PC-3 (cell line): ENCODE measurements at regions of chr14 and their contacts with region 1.

Region 1: DNA sequence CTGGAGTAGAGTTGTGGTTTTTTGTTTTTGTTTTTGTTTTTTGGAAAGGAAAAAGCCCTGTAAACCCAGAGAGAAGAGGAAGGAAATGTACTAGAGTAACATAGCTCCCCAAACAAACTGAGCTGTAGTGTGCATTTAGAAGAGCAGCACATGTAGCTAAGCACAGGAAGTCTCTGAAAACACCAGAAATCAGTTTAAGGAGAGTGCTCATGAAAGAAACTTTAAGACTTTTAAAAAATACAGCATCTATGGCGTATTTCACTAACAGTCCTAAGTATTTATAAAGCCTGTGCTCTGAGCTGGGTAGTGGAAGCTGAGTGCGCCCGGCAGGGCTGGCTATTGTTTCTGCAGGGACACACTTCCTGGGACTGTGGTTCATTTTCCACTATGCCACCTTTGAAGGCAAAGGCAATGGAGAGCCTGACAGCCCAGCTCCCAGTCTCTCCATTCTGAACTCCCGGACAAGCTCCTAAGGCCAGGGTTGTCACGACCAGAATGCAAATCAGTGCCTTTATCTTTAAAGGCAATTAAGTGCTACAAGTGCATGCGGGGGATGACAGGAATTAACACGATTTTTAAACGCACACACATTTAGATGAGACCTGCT is 45.4 kb downstream of the NIN start:
- DNase-seq: no peak
- ATAC-seq: no peak
- H3K4me3 ChIP-seq: no peak overlapping the region
- H3K27ac ChIP-seq: no peak overlapping the region
- H3K4me1 ChIP-seq: peaks cover 15% of the 10 kb centered on the region
- H3K27me3 ChIP-seq: no peaks in the 10 kb centered on the region
- CTCF ChIP-seq: no peak

Region 2: GRCh38 chr14:50697659-50698290 is 87.8 kb before region 1 on chr14:
- CTCF ChIA-PET with region 1: no interaction called
- POLR2A ChIA-PET with region 1: no interaction called
- intact Hi-C with region 1: no loop called
- DNase-seq: no peak
- ATAC-seq: no peak; the same call in 1 of the 2 replicates
- H3K4me3 ChIP-seq: no peak overlapping the region
- H3K27ac ChIP-seq: no peak overlapping the region
- H3K4me1 ChIP-seq: no peaks in the 10 kb centered on the region
- H3K27me3 ChIP-seq: no peaks in the 10 kb centered on the region
- CTCF ChIP-seq: no peak

Region 3: GRCh38 chr14:50804181-50804721 is 18.7 kb after region 1 on chr14:
- CTCF ChIA-PET with region 1: no interaction called
- POLR2A ChIA-PET with region 1: no interaction called
- intact Hi-C with region 1: loop called (anchors 2 kb)
- DNase-seq: no peak
- ATAC-seq: no peak; the same call in 1 of the 2 replicates
- H3K4me3 ChIP-seq: no peak overlapping the region
- H3K27ac ChIP-seq: no peak overlapping the region
- H3K4me1 ChIP-seq: peaks cover 31% of the 10 kb centered on the region
- H3K27me3 ChIP-seq: no peaks in the 10 kb centered on the region
- CTCF ChIP-seq: no peak

Region 4: GRCh38 chr14:50823051-50823761 is 37.6 kb after region 1 on chr14:
- CTCF ChIA-PET with region 1: no interaction called
- POLR2A ChIA-PET with region 1: interaction called, 3 read pairs
- intact Hi-C with region 1: loop called (anchors 2 kb)
- DNase-seq: peak; percentile 25
- ATAC-seq: peak; percentile 18
- H3K4me3 ChIP-seq: no peak overlapping the region
- H3K27ac ChIP-seq: peak overlapping the region; percentile 58
- H3K4me1 ChIP-seq: peaks cover 20% of the 10 kb centered on the region
- H3K27me3 ChIP-seq: no peaks in the 10 kb centered on the region
- CTCF ChIP-seq: no peak

Region 5: DNA sequence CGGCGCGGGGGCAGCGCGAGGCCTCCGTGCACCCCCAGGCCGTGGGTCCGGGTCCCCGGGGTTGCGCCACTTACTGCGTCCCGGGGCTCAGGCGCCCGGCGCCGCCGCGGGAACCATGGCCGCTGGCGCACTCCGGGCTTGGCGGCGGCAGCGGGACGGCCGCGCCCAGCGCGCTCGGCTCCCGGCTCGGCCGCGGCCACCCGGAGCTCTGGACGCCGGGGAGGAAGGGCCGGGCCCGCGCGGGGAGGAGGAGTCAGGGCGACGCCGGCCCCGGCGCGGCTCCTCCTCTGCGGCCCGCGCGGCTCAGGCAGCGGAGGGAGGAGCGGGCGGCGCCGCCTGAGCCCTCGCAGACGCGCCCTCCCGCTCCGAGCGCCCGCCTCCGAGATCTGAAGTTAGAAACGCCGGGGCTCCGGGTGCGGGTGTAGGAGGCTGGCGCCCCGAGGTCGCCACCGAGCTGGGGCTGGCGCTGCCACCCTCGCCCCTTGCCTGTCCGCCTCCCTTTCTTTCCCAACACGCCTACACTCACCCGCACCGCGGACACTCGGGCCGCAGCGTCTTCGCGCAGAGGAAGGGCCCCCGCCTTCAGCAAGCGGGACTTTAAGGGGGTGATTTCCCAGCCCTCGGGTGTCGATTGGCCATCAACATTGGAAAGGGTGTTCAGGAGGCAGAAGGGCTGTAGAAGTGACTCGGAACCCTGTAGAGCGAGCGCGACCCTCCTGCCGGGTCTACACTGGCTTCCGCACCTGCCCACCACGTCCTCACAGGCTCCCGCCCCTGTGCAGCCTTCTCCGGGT is 45.6 kb after region 1 on chr14 and contains the start of gene NIN:
- CTCF ChIA-PET with region 1: no interaction called
- POLR2A ChIA-PET with region 1: interaction called, 5 read pairs
- intact Hi-C with region 1: loop called (anchors 2 kb)
- DNase-seq: peak; percentile 92
- ATAC-seq: peak; percentile 93
- H3K4me3 ChIP-seq: peak within 1 kb of the TSS; percentile 86
- H3K27ac ChIP-seq: no peak within 1 kb of the TSS
- H3K4me1 ChIP-seq: peaks cover 23% of the 10 kb centered on the region
- H3K27me3 ChIP-seq: no peaks in the 10 kb centered on the region
- CTCF ChIP-seq: no peak
- total RNA-seq, gene NIN: 34.3 and 40.1 TPM in 2 replicates

Region 6: DNA sequence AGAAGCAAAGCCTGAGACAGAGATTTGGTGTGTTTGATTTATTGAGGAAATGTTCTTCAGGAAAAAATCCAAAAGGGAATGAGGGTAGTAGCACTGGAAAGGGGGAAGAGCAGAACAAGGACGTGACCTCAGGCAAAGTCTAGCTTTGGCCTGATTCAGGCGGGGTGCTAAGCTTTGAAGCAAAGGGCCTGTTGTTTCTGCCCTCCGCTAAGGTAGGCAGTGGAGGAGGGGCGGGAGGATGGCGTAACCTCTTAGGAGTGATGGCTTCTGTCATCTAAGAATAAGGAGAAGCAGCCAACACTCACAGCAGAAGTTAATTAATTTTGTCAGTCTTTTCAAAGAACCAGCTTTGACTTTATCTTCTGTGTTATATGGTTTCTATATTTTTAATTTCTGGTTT is 106.7 kb after region 1 on chr14:
- CTCF ChIA-PET with region 1: no interaction called
- POLR2A ChIA-PET with region 1: no interaction called
- intact Hi-C with region 1: no loop called
- DNase-seq: no peak
- ATAC-seq: no peak
- H3K4me3 ChIP-seq: no peak overlapping the region
- H3K27ac ChIP-seq: no peak overlapping the region
- H3K4me1 ChIP-seq: peaks cover 8% of the 10 kb centered on the region; the same call in 1 of the 2 replicates
- H3K27me3 ChIP-seq: no peaks in the 10 kb centered on the region
- CTCF ChIP-seq: no peak

Region 7: GRCh38 chr14:50943943-50944646 is 158.5 kb after region 1 on chr14 and contains the start of gene PYGL:
- CTCF ChIA-PET with region 1: no interaction called
- POLR2A ChIA-PET with region 1: no interaction called
- intact Hi-C with region 1: loop called (anchors 5 kb)
- DNase-seq: peak; percentile 88
- ATAC-seq: peak; percentile 76
- H3K4me3 ChIP-seq: peak within 1 kb of the TSS; percentile 97
- H3K27ac ChIP-seq: peak within 1 kb of the TSS; percentile 57
- H3K4me1 ChIP-seq: peaks cover 19% of the 10 kb centered on the region
- H3K27me3 ChIP-seq: no peaks in the 10 kb centered on the region
- CTCF ChIP-seq: no peak
- total RNA-seq, gene PYGL: 163 and 174 TPM in 2 replicates

Region 8: GRCh38 chr14:50964595-50965390 is 179.2 kb after region 1 on chr14:
- CTCF ChIA-PET with region 1: no interaction called
- POLR2A ChIA-PET with region 1: interaction called, 11 read pairs
- intact Hi-C with region 1: no loop called
- DNase-seq: peak; percentile 97
- ATAC-seq: peak; percentile 49
- H3K4me3 ChIP-seq: no peak overlapping the region
- H3K27ac ChIP-seq: peak overlapping the region; percentile 31
- H3K4me1 ChIP-seq: peaks cover 35% of the 10 kb centered on the region
- H3K27me3 ChIP-seq: no peaks in the 10 kb centered on the region
- CTCF ChIP-seq: no peak